ENCODE measurements at regions of chr22 and their contacts with region 1.

Region 1: DNA sequence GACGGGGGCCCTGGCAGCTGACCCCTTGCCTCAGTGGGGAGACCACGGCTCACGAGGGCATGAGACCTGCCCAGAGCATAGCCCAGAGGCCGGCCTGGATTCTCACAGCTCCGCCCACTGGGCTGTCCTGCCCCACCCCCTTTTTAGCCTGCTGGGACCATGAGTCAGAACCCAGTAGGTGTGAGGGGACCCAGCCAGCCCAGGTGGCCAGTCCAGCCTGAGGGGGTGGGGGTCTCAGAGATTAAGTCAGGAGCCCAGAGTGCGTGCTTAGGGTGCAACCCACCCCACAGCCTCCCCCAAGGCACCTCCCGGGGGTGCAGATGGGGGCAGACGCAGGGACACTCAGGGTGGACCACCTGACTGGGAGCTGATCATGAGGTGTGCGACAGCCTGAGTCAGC is 40.1 kb upstream of the PPARA start:
- DNase-seq: no peak
- H3K4me3 ChIP-seq: no peak overlapping the region
- H3K27ac ChIP-seq: peak overlapping the region; percentile 59 to 76
- H3K4me1 ChIP-seq: peaks cover 0 to 76% (median 44%) of the 10 kb centered on the region in 3 donors
- H3K27me3 ChIP-seq: no peaks in the 10 kb centered on the region
- CTCF ChIP-seq: no peak

Region 2: GRCh38 chr22:45977003-45977411 is 133.2 kb before region 1 on chr22 and contains the start of gene WNT7B:
- intact Hi-C with region 1: no loop called
- DNase-seq: peak in 3 of 5 donors; percentile 42 to 74 (median 60)
- H3K4me3 ChIP-seq: no peak within 1 kb of the TSS
- H3K27ac ChIP-seq: no peak within 1 kb of the TSS
- H3K4me1 ChIP-seq: peaks cover 0 to 10% (median 0%) of the 10 kb centered on the region in 3 donors
- H3K27me3 ChIP-seq: peaks cover 31% of the 10 kb centered on the region
- CTCF ChIP-seq: no peak
- total RNA-seq, gene WNT7B: 1.6 TPM

Region 3: GRCh38 chr22:46002757-46003270 is 107.4 kb before region 1 on chr22:
- intact Hi-C with region 1: loop called (anchors 5 kb)
- DNase-seq: peak in 3 of 5 donors; percentile 52 to 81 (median 54)
- H3K4me3 ChIP-seq: no peak overlapping the region
- H3K27ac ChIP-seq: peak overlapping the region in 1 of 2 donors; percentile 13
- H3K4me1 ChIP-seq: peaks cover 0 to 38% (median 18%) of the 10 kb centered on the region in 3 donors
- H3K27me3 ChIP-seq: no peaks in the 10 kb centered on the region
- CTCF ChIP-seq: no peak

Region 4: GRCh38 chr22:46013460-46014416 is 96.5 kb before region 1 on chr22:
- intact Hi-C with region 1: no loop called
- DNase-seq: peak; percentile 93 to 99 (median 95)
- H3K4me3 ChIP-seq: peak overlapping the region; percentile 67 to 77 (median 75)
- H3K27ac ChIP-seq: peak overlapping the region; percentile 97
- H3K4me1 ChIP-seq: peaks cover 0 to 23% (median 16%) of the 10 kb centered on the region in 3 donors
- H3K27me3 ChIP-seq: no peaks in the 10 kb centered on the region
- CTCF ChIP-seq: peak; percentile 40

Measured in kidney (tissue), 22 donors.